ENCODE measurements at regions of chr12 and their contacts with region 1.

Region 1: DNA sequence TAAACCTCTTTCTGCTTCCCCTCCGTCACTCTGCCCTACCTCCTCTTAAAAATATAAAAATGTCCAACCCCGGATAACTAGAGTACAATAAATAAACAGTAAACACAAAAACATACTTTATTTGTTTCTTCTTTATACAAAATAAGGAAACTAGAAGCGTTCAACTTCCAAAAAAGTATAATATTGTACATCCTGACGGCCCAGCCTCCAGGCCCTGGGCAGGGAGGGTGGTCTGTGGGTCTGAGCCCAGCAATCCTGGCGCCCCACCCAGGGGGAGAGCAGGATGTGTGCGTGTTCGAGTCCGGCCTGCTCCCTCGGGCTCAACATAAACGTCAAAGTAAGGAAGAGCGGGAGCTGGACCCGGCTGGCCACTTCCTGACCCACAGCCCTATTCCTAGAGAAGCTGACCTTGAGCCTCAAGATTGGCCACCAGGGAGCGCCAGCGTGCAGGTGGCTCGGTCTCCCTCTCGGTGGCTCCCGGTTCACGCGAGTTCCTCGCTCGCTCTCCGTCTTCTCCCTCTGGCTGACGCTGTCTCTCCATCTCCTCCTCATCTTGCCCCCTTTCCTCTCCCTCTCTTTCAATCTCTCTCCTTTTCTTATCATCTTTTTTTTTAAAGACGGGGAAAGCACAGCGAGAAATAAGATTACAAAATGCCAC is 9.4 kb downstream of the LHX5 start:
- DNase-seq: peak; percentile 81
- CTCF ChIP-seq: peak; percentile 80

Region 2: DNA sequence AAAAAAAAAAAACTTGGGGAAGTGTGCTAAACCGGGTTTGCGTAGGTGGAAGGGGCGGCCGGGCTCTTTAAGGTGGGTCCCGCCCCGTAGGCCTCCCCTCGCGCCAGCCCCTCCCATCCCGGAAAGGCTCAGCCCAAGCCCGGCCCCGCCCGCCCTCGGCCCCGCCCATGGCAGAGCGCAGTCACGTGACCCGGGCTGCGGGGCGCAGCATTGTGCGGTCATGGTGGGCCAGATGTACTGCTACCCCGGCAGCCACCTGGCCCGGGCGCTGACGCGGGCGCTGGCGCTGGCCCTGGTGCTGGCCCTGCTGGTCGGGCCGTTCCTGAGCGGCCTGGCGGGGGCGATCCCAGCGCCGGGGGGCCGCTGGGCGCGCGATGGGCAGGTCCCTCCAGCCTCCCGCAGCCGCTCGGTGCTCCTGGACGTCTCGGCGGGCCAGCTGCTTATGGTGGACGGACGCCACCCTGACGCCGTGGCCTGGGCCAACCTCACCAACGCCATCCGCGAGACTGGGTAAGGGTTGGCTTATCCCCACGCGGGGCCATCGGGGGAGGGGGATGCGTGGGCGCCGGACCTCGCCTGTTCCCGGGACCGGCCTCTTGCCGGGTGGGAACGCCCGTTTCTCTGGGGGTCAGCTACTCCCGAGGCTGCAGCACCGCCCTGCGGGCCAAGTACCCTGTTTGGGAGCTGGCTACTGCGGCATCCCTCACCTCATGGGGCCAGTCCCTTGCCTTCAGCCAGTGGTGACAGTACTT is 103.7 kb before region 1 on chr12 and contains the start of gene PLBD2:
- CTCF ChIA-PET with region 1: no interaction called
- POLR2A ChIA-PET with region 1: no interaction called
- DNase-seq: peak; percentile 100
- CTCF ChIP-seq: no peak

Region 3: DNA sequence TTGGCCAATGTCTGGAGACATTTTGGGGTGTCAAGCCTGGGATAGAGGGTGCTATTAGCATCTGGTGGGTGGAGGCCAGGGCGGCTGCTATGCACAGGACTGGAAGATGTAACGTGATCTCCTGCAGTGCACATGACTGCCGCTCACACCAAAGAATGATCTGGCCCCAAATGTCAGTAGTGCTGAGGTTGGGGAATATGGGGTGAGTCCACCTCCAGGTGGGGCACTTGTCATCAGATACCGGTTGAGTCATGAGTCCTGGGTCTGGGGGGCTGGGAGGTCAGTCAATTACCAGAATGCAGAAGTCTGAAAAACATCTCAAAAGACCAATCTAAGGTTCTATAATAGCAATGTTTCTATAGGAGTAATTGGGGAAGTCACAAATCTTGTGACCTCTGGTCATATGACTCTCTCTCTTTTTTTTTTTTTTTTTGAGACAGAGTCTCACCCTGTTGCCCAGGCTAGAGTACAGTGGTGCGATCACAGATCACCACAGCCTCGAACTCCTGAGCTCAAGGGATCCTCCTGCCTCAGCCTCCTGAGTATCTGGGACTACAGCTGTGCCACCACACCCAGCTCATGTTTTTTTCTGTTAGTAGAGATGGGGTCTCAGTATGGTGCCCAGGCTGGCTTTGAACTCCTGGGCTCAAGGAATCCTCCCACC is 46.0 kb before region 1 on chr12:
- CTCF ChIA-PET with region 1: no interaction called
- POLR2A ChIA-PET with region 1: no interaction called
- DNase-seq: no peak
- CTCF ChIP-seq: no peak

Region 4: DNA sequence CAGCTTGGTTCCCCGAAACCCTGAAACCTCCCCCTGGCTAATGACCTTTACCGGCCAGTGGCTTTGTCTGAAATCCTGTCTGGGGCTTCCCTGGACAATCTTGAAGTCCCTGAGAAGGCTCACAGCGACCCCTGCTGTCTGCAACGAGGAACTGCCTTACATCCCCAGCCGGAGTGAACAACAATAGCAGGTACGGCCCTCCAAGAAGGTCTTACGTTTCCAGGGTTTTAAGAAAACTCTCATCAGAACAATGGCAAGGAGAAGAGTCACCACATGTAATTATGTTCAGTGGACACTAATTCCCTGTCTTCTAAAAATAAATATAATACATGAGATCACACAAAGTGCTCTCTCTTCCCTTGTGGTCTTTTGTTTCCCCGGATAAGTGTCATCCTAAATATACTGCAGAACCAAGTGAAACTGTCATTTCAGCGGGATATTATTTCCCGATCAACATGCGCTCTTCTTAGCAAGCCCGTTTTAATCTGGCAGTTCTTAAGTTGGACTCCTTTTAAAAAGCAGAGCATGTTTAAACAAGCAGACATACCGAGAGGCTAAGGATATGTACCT is 450.6 kb after region 1 on chr12:
- CTCF ChIA-PET with region 1: interaction called, 34 read pairs
- POLR2A ChIA-PET with region 1: no interaction called
- DNase-seq: peak; percentile 69
- CTCF ChIP-seq: peak; percentile 86